Activated CD4-positive, alpha-beta memory T cell treated with anti-CD3 and anti-CD28 coated beads for 36 hours (primary cell): ENCODE measurements at regions of chr1 and their contacts with region 1.

Region 1: GRCh38 chr1:16366722-16367257 is at the start of gene SZRD1:
- DNase-seq: peak; percentile 98
- H3K4me3 Mint-ChIP-seq: peak within 1 kb of the TSS; percentile 97
- H3K27ac Mint-ChIP-seq: peak within 1 kb of the TSS; percentile 100
- H3K4me1 Mint-ChIP-seq: peaks cover 27% of the 10 kb centered on the region
- H3K27me3 Mint-ChIP-seq: no peaks in the 10 kb centered on the region
- total RNA-seq, gene SZRD1: 185 to 191 TPM

Region 2: DNA sequence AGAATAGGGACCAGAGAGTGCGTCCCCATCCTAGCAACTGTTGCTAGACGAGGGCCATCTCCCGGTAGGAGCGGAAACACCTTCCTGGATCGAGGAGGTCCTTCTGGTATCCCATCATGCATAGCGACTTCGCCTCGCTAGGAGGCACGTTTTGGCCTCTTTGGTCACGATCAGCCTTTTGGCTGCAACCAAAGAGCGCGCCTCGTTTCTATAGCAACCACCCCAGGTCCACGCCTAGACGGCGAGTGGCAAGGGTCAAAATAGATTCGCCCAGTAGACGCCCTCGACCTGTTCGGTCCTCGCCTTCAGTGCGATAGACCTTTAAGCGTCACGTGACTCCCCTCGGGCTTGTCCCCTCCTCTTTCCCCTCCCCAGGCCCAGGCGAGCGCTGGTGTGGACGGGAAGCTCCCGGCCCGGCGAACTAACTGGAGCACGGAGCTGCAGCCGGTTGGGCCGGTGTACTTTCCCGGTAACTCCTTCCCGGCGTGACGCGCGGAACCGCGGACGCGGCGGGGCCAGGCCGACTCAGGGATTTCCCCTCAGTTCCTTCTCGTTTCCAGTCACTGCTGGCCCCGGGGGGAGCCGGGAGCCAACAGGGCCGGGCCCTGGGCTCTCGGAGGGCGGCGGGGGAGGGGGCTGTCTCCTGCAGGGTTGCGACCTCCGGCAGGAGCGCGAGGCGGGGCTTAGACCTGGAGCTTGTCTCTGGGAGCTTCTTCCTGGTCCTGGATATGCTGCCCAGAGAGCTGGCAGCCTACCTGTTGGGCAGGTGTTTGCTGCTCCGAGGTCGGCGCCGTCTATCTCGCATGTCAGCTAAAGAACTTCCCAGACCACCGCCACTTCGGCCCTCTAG is 840.1 kb before region 1 on chr1 and contains the start of gene DNAJC16:
- CTCF ChIA-PET with region 1: no interaction called
- POLR2A ChIA-PET with region 1: no interaction called
- intact Hi-C with region 1: loop called (anchors 1 kb)
- DNase-seq: peak; percentile 99
- H3K4me3 Mint-ChIP-seq: peak within 1 kb of the TSS; percentile 89
- H3K27ac Mint-ChIP-seq: peak within 1 kb of the TSS; percentile 99
- H3K4me1 Mint-ChIP-seq: peaks cover 50% of the 10 kb centered on the region
- H3K27me3 Mint-ChIP-seq: no peaks in the 10 kb centered on the region
- total RNA-seq, gene DNAJC16: 10.0 to 10.4 TPM

Region 3: DNA sequence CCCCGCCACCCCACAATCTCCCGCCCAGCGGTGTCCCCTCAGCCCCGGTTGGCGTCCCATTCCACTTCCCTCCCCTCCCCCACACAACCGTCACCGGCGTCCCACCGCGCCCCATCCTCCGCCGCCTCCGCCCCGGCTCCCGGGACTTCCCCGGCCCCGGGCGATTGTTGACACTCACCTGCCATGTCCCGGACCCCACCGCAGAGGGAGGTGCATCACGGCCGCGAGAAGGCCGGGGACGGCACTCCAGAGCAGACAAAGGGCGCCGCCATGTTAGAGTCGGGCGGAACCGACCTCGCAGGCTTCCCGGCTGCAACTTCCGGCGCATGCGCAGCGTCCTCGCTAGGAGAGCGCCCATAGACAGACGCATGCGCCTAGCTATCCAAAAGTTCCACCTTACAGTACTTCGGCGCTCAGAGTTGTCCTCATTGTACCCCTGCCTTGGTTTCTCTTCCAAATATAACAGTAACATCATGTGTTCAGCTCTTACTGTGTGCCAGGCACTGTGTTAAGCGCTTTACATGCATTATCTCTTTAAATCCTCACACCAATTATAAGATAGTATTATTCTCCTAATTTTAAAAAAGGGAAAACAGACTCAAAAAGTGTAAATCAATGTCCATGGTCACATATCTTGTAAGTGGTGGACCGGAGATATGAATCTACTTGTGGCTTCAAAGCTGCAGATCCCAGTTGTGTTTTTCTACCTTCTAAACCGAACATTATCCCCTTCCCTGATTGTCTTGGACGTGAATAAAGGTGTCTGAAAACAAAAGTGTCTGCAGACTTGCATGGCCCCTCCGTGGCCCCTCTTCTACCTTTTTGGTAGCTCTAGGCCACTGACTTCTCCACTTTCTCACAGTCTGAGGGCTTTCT is 390.7 kb before region 1 on chr1 and contains the start of gene ZBTB17:
- CTCF ChIA-PET with region 1: no interaction called
- POLR2A ChIA-PET with region 1: no interaction called
- intact Hi-C with region 1: loop called (anchors 5 kb)
- DNase-seq: peak; percentile 97
- H3K4me3 Mint-ChIP-seq: peak within 1 kb of the TSS; percentile 87
- H3K27ac Mint-ChIP-seq: peak within 1 kb of the TSS; percentile 94
- H3K4me1 Mint-ChIP-seq: peaks cover 38% of the 10 kb centered on the region
- H3K27me3 Mint-ChIP-seq: no peaks in the 10 kb centered on the region
- total RNA-seq, gene ZBTB17: 52.7 to 58.8 TPM

Region 4: DNA sequence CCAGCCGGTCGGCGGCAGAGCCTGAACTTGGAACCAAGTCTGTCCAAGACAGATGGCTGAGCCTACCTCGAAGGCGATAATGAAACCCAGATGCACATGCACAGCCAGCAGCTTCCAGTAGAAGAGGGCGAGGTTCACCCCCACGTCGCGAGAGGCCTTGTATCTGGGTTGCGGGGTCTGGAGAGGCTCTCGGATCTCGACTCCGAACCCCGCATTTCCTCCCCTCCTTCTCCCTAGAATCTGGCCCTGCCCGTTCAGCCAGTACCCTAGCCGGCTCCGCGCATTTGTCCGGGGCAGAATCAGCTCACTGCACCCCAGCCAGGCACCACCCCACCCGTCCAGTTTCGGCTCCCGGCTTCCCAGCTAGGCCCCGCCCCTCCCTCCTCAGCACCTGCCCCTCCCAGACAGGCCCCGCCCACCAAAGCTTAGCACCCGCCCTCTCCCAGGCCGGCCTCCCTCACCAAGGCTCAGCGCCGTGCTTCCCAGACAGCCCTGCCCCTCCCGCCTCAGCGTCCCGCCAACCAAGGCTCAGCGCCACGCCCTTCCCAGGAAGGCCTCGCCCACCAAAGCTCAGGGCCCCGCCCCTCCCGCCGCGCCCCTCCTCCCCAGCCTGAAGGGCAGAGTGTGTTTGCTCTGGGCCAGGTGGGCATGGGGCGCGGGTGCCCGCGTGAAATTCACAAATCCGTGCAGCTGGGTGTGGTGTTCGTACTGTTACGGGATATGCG is 149.6 kb before region 1 on chr1:
- CTCF ChIA-PET with region 1: no interaction called
- POLR2A ChIA-PET with region 1: no interaction called
- intact Hi-C with region 1: no loop called
- DNase-seq: peak; percentile 98
- H3K4me3 Mint-ChIP-seq: peak overlapping the region; percentile 81
- H3K27ac Mint-ChIP-seq: no peak overlapping the region
- H3K4me1 Mint-ChIP-seq: peaks cover 10% of the 10 kb centered on the region
- H3K27me3 Mint-ChIP-seq: peaks cover 2% of the 10 kb centered on the region

Region 5: GRCh38 chr1:16236511-16237342 is 130.1 kb before region 1 on chr1 and contains the start of gene CPLANE2:
- CTCF ChIA-PET with region 1: interaction called, 10 read pairs
- POLR2A ChIA-PET with region 1: no interaction called
- intact Hi-C with region 1: loop called (anchors 1 kb)
- DNase-seq: peak; percentile 98
- H3K4me3 Mint-ChIP-seq: peak within 1 kb of the TSS; percentile 85
- H3K27ac Mint-ChIP-seq: peak within 1 kb of the TSS; percentile 82
- H3K4me1 Mint-ChIP-seq: peaks cover 17% of the 10 kb centered on the region
- H3K27me3 Mint-ChIP-seq: no peaks in the 10 kb centered on the region
- total RNA-seq, gene CPLANE2: 3.9 to 5.0 TPM

Region 6: GRCh38 chr1:16420424-16421118 is 53.8 kb after region 1 on chr1:
- CTCF ChIA-PET with region 1: no interaction called
- POLR2A ChIA-PET with region 1: interaction called, 7 read pairs
- intact Hi-C with region 1: loop called (anchors 1 kb)
- DNase-seq: peak; percentile 91
- H3K4me3 Mint-ChIP-seq: peak overlapping the region; percentile 17
- H3K27ac Mint-ChIP-seq: peak overlapping the region; percentile 72
- H3K4me1 Mint-ChIP-seq: peaks cover 32% of the 10 kb centered on the region
- H3K27me3 Mint-ChIP-seq: no peaks in the 10 kb centered on the region

Region 7: GRCh38 chr1:16904560-16905111 is 537.8 kb after region 1 on chr1:
- CTCF ChIA-PET with region 1: no interaction called
- POLR2A ChIA-PET with region 1: interaction called, 3 read pairs
- intact Hi-C with region 1: loop called (anchors 10 kb)
- DNase-seq: peak; percentile 100
- H3K4me3 Mint-ChIP-seq: no peak overlapping the region
- H3K27ac Mint-ChIP-seq: no peak overlapping the region
- H3K4me1 Mint-ChIP-seq: peaks cover 25% of the 10 kb centered on the region
- H3K27me3 Mint-ChIP-seq: no peaks in the 10 kb centered on the region